MCF 10A (cell line): ENCODE measurements at regions of chr3 and their contacts with region 1.

Region 1: GRCh38 chr3:150094150-150094925 is 123.6 kb upstream of the PFN2 start:
- DNase-seq: peak; percentile 86
- H3K4me3 Mint-ChIP-seq: no peak overlapping the region
- H3K27ac Mint-ChIP-seq: peak overlapping the region; percentile 12
- H3K4me1 Mint-ChIP-seq: peaks cover 22% of the 10 kb centered on the region
- H3K27me3 Mint-ChIP-seq: no peaks in the 10 kb centered on the region
- CTCF ChIP-seq: no peak

Region 2: GRCh38 chr3:149969940-149970715 is 124.2 kb before region 1 on chr3:
- CTCF ChIA-PET with region 1: interaction called, 3 read pairs
- POLR2A ChIA-PET with region 1: interaction called, 5 read pairs
- intact Hi-C with region 1: loop called (anchors 1 kb)
- DNase-seq: peak; percentile 80
- H3K4me3 Mint-ChIP-seq: peak overlapping the region; percentile 80
- H3K27ac Mint-ChIP-seq: peak overlapping the region; percentile 84
- H3K4me1 Mint-ChIP-seq: peaks cover 28% of the 10 kb centered on the region
- H3K27me3 Mint-ChIP-seq: no peaks in the 10 kb centered on the region
- CTCF ChIP-seq: no peak